ENCODE measurements at regions of chr6 and their contacts with region 1.

Region 1: DNA sequence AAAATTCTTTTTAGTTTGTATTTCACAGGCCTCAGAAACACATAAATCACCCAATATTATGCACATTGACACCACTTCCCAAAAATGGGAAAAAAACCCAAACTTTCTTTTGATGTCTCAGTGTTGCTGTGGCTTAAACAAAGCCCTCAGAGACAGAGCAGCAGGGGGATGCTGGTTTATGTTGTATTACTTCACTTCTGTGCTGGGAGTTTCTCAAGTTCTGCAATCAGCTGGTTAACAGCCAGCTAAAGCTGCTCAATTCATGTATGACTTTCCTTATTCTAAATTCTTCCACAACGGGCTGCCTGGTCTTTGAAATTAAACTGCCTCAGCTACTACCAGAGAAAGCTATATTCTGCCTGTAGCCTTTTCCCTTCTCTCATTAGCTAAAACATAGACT is 5.6 kb downstream of the FILIP1 start:
- DNase-seq: no peak
- ATAC-seq: peak in 2 of 8 donors; percentile 4 to 26
- H3K4me3 ChIP-seq: peak overlapping the region in 7 of 10 donors; percentile 6 to 71 (median 63)
- H3K27ac ChIP-seq: peak overlapping the region in 9 of 10 donors; percentile 26 to 95 (median 89)
- H3K4me1 ChIP-seq: peaks cover 0 to 72% (median 49%) of the 10 kb centered on the region in 9 donors
- H3K27me3 ChIP-seq: no peaks in the 10 kb centered on the region
- CTCF ChIP-seq: no peak

Region 2: GRCh38 chr6:75424618-75425548 is 63.1 kb before region 1 on chr6:
- intact Hi-C with region 1: loop called in 4 of 10 experiments (anchors 5 to 10 kb)
- DNase-seq: no peak
- ATAC-seq: no peak
- H3K4me3 ChIP-seq: no peak overlapping the region
- H3K27ac ChIP-seq: peak overlapping the region in 1 of 10 donors; percentile 17
- H3K4me1 ChIP-seq: peaks cover 6 to 85% (median 51%) of the 10 kb centered on the region in 9 donors
- H3K27me3 ChIP-seq: no peaks in the 10 kb centered on the region
- CTCF ChIP-seq: no peak

Region 3: DNA sequence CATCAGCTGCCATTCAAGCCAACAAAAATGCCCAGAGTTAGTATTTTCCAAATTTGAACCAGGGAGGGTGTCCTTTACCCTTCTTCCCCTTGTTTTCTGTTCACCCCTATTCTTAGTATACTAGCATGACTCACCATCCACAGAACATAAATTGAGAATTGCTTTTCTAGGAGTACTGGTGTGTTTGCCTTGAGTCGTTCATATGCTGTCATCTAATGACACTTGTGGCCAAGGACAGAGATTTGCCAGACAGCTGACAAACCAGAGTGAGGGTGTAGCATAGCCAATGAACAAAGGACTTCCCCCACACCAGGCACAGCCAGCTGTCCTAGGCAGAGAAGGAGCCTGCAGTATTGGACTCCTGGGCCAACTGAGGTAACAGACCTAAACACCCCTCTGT is 56.7 kb before region 1 on chr6:
- intact Hi-C with region 1: loop called in 6 of 10 experiments (anchors 2 to 10 kb)
- DNase-seq: peak; percentile 23 to 73
- ATAC-seq: peak; percentile 86 to 98 (median 93)
- H3K4me3 ChIP-seq: peak overlapping the region in 1 of 10 donors; percentile 8
- H3K27ac ChIP-seq: peak overlapping the region; percentile 41 to 83 (median 58)
- H3K4me1 ChIP-seq: peaks cover 12 to 81% (median 60%) of the 10 kb centered on the region in 9 donors
- H3K27me3 ChIP-seq: no peaks in the 10 kb centered on the region
- CTCF ChIP-seq: no peak

Region 4: GRCh38 chr6:75437421-75437891 is 50.6 kb before region 1 on chr6:
- intact Hi-C with region 1: loop called in 6 of 10 experiments (anchors 2 to 10 kb)
- DNase-seq: peak in 1 of 2 donors; percentile 22
- ATAC-seq: peak; percentile 60 to 84 (median 76)
- H3K4me3 ChIP-seq: no peak overlapping the region
- H3K27ac ChIP-seq: peak overlapping the region; percentile 52 to 78 (median 68)
- H3K4me1 ChIP-seq: peaks cover 21 to 69% (median 38%) of the 10 kb centered on the region in 9 donors
- H3K27me3 ChIP-seq: no peaks in the 10 kb centered on the region
- CTCF ChIP-seq: no peak